Activated T-helper 1 cell treated with anti-CD3 and anti-CD28 coated beads, Interleukin-12 subunit alpha, Interleukin-12 subunit beta, Interleukin-2, Interleukin-4 antibody, amounts not matched to agents 30 ng/mL and 10 ng/mL and 1 ng/mL, durations not matched to agents 14 hours and 24 hours and 36 hours (primary cell): ENCODE measurements at regions of chr11 and their contacts with region 1.

Region 1: DNA sequence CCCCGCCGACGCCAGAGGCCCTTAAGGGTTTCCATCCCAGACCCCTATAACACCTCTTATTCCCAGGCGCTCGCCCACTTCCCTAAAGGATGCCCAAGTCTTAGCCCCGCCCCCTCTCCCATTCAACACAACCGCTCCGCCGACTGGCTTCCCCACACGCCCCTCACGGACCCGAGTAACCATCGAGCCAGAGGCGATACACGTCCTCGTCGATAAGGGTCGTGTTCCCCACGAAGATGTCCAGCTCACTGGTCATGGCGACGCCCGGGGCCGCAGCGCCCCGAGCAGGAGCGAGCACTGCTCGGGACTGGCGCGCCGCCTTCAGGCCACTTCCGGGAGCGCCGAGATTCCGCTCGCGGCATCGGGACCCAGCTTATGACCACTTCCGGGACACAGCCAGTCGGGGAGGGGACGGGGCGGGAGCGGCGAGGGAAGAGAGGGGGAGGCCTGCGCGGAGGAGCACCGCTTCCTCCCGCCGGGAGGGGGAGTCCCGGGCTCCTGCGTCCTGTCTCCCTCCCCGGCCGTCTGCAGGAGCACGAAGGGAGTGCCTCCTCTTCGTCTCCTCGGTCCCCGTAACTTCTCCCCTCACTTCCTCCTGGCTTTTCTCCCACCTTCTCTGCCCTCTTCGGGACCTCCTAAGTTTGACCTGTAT is at the start of gene FIBP:
- DNase-seq: peak; percentile 90
- H3K4me3 Mint-ChIP-seq: peak within 1 kb of the TSS; percentile 99
- H3K27ac Mint-ChIP-seq: peak within 1 kb of the TSS; percentile 96
- H3K4me1 Mint-ChIP-seq: peaks cover 58% of the 10 kb centered on the region
- H3K27me3 Mint-ChIP-seq: no peaks in the 10 kb centered on the region
- total RNA-seq, gene FIBP: 86.8 and 93.2 TPM in 2 replicates

Region 2: DNA sequence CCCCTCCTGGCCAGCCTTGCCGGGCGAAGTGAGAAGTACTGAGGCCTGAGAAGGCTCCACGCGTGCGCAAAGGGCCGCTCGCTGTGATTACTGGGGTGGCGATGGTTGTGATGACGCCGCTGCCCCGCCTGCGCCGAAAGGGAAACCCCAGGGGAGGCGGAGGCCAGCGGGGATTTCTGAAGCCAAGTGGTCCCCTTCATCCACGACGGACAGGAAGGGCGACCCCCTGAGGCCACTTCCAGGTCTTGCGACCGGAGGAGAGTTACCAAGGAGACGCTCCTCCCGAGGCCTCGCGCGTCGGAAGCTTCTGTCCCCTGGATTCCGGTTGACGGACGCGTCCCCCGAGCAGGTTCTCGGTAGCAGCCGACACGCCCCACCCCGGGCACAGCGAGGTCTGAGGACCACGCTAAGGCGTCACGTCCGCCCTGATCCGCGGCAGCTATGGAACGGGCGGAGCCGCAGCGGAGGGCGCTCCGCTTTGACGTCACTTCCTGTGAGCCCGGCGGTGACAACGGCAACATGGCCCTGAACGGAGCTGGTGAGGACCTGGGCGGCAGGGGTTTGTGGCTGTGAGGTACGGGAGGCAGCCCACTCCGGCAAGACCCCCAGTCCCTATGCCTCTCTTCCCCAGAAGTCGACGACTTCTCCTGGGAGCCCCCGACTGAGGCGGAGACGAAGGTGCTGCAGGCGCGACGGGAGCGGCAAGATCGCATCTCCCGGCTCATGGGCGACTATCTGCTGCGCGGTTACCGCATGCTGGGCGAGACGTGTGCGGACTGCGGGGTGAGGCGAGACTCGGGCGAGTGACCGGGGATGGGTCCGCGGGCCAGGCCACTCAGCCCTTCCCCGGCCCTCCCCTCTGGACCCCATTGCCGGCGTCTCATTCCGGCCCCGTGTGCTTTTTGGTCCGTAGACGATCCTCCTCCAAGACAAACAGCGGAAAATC is 318.0 kb before region 1 on chr11 and contains the start of gene ZNRD2:
- intact Hi-C with region 1: no loop called
- DNase-seq: peak; percentile 99
- H3K4me3 Mint-ChIP-seq: peak within 1 kb of the TSS; percentile 99
- H3K27ac Mint-ChIP-seq: peak within 1 kb of the TSS; percentile 98
- H3K4me1 Mint-ChIP-seq: peaks cover 64% of the 10 kb centered on the region
- H3K27me3 Mint-ChIP-seq: no peaks in the 10 kb centered on the region
- total RNA-seq, gene ZNRD2: 94.6 and 96.9 TPM in 2 replicates

Region 3: GRCh38 chr11:65652511-65653231 is 235.6 kb before region 1 on chr11:
- intact Hi-C with region 1: loop called (anchors 1 kb)
- DNase-seq: peak; percentile 95
- H3K4me3 Mint-ChIP-seq: peak overlapping the region; percentile 88
- H3K27ac Mint-ChIP-seq: peak overlapping the region; percentile 97
- H3K4me1 Mint-ChIP-seq: peaks cover 42% of the 10 kb centered on the region
- H3K27me3 Mint-ChIP-seq: peaks cover 3% of the 10 kb centered on the region

Region 4: GRCh38 chr11:65873318-65874156 is 14.8 kb before region 1 on chr11:
- intact Hi-C with region 1: loop called (anchors 1 kb)
- DNase-seq: peak; percentile 97
- H3K4me3 Mint-ChIP-seq: peak overlapping the region; percentile 90
- H3K27ac Mint-ChIP-seq: peak overlapping the region; percentile 72
- H3K4me1 Mint-ChIP-seq: peaks cover 16% of the 10 kb centered on the region
- H3K27me3 Mint-ChIP-seq: peaks cover 1% of the 10 kb centered on the region

Region 5: DNA sequence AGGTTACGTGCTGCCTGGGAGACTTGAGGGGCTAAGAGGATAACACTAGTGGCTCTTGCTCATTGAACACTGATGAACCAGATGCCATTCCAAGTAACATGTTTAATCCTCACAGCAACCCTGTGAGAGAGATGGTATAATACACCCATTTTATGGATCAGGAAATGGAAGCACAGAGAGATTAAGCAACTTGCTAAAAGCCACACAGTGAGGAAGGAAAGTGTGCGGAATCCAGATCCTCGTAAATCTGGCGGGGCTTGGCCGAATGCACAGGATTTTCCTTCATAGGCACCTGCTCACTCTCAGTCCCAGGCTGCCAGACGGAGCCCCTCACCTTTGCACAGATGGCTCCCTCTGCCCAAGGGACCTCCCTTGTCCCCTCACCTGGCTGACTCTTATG is 19.6 kb after region 1 on chr11:
- intact Hi-C with region 1: no loop called
- DNase-seq: no peak
- H3K4me3 Mint-ChIP-seq: no peak overlapping the region
- H3K27ac Mint-ChIP-seq: no peak overlapping the region
- H3K4me1 Mint-ChIP-seq: peaks cover 8% of the 10 kb centered on the region
- H3K27me3 Mint-ChIP-seq: peaks cover 22% of the 10 kb centered on the region

Region 6: GRCh38 chr11:65919146-65920033 is 31.1 kb after region 1 on chr11 and contains the start of gene DRAP1:
- intact Hi-C with region 1: loop called (anchors 1 kb)
- DNase-seq: peak; percentile 97
- H3K4me3 Mint-ChIP-seq: peak within 1 kb of the TSS; percentile 94
- H3K27ac Mint-ChIP-seq: peak within 1 kb of the TSS; percentile 84
- H3K4me1 Mint-ChIP-seq: peaks cover 17% of the 10 kb centered on the region
- H3K27me3 Mint-ChIP-seq: no peaks in the 10 kb centered on the region
- total RNA-seq, gene DRAP1: 119 and 129 TPM in 2 replicates

Region 7: DNA sequence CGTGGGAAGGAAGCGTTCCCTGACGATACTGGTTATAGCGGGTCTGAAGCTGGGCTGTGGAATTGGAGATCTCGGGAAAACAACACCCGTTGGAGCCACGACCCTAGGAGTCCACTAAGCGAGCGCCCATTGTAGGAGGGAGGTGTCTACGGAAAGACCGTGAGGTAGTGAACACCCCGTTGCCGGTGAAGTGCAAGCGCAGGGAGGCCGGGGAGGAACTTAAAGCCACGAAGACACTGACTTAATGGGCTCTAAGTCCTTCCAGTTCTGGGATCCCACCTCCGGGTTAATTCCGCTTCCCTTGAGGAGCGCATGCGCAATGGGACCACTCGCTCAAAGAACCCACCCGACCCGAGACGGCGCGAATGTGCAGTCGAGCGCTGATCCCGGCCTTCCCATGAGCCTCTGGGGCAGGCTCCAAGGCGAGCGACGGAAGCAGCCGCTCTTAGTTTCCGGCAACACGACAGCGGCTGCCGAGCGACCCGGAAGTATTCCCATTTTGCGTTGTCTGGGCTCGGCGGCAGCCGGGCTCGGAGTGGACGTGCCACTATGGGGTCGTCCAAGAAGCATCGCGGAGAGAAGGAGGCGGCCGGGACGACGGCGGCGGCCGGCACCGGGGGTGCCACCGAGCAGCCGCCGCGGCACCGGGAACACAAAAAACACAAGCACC is 73.1 kb after region 1 on chr11 and contains the start of gene SART1:
- intact Hi-C with region 1: loop called (anchors 1 kb)
- DNase-seq: peak; percentile 94
- H3K4me3 Mint-ChIP-seq: peak within 1 kb of the TSS; percentile 98
- H3K27ac Mint-ChIP-seq: peak within 1 kb of the TSS; percentile 99
- H3K4me1 Mint-ChIP-seq: peaks cover 41% of the 10 kb centered on the region
- H3K27me3 Mint-ChIP-seq: no peaks in the 10 kb centered on the region
- total RNA-seq, gene SART1: 110 TPM in 2 replicates

Region 8: GRCh38 chr11:66051766-66052663 is 163.7 kb after region 1 on chr11 and contains the start of gene SF3B2:
- intact Hi-C with region 1: loop called (anchors 5 kb)
- DNase-seq: peak; percentile 97
- H3K4me3 Mint-ChIP-seq: peak within 1 kb of the TSS; percentile 100
- H3K27ac Mint-ChIP-seq: peak within 1 kb of the TSS; percentile 97
- H3K4me1 Mint-ChIP-seq: peaks cover 33% of the 10 kb centered on the region
- H3K27me3 Mint-ChIP-seq: peaks cover 4% of the 10 kb centered on the region
- total RNA-seq, gene SF3B2: 267 TPM in 2 replicates